ENCODE measurements at regions of chr19 and their contacts with region 1.

Region 1: GRCh38 chr19:3429581-3430080 is 50.7 kb downstream of the SMIM24 start:
- DNase-seq: peak; percentile 99
- H3K4me3 Mint-ChIP-seq: peak overlapping the region; percentile 51
- H3K27ac Mint-ChIP-seq: peak overlapping the region; percentile 95
- H3K4me1 Mint-ChIP-seq: peaks cover 22% of the 10 kb centered on the region
- H3K27me3 Mint-ChIP-seq: no peaks in the 10 kb centered on the region
- CTCF ChIP-seq: peak; percentile 92

Region 2: DNA sequence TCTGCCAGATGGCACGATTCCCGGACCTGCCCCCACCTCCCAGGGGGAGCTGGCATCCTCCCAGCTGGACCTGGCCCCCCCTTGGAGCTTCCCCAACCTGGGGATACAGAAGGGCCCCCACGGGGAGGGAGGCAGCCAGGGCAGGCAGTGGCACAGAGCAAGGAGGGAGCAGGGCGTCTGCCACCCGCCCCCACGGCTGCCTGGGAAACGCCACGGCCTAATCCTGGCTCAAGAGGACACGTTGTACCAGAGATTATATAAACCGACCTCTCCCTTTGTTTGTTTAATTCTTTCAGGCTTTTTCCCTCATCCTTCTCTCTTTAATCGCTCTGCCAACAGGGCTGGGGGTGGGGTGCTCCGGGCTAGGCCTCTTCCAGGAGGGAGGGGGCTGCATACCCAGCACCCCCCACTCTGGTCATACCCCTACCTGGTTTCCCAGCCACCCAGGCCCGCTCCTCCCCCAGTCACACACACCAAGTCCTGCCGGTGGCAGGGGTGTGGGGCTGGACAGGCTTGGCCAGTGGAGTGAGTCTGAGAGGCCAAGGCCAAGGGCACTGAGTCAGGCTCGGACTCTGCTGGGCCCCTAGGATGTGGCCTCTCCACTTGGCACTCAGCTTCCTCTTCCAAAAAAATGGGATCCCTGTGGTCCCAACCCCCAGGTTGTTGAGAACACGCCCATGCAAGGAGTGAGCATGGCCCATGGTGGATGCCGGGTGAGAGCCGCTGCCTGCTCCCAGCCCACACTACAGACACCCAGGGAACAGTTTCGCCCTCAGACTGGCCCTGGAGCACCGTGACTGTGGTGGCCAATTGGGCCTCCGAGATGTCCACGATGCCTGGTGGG is 92.7 kb before region 1 on chr19:
- CTCF ChIA-PET with region 1: interaction called, 4 read pairs
- POLR2A ChIA-PET with region 1: interaction called, 21 read pairs
- intact Hi-C with region 1: no loop called
- DNase-seq: peak; percentile 98
- H3K4me3 Mint-ChIP-seq: peak overlapping the region; percentile 55
- H3K27ac Mint-ChIP-seq: peak overlapping the region; percentile 99
- H3K4me1 Mint-ChIP-seq: peaks cover 48% of the 10 kb centered on the region
- H3K27me3 Mint-ChIP-seq: peaks cover 13% of the 10 kb centered on the region
- CTCF ChIP-seq: no peak

Region 3: DNA sequence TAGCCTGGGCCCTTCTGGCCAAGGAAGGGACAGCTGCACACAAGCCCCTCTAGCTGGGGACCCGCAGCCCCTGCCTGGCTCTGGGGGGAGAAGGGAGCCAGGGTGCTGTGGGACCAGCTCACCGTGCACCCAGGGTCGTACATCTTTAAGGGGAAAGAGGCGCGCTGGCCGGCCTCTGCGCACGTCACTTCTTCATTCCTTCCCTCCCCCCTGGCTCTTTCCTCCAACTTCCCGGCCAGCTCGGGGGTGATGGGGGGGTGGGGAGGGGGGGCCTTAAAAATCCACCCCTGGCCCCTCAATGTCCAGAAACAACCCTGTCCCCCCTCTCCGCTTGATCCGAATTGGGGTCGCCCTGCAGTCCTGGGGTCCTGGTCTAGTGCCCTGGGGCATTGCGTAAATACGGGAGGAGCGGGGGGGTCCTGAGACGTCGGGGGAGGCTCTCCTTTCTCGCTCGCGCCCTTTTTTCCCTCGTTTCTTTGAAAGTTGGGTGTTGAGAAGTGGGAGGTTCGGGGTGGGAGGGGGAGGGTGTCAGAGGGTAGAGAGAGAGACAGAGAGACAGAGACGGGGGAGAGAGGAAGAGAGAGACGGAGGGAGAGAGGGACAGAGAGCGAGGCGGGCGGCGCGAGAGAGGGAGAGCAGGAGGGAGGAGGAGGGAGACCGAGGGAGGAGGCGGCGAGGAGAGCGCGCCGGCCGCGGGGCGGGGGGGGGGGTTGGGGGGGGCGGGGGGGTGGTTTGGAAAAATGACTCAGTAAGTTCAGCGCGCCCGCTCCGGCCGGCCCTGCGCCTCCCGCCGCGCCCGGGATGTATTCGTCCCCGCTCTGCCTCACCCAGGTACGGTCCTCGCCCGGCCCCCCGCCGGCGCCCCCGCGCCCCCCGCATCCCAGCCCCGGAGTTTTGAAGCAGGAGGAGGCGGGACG is 63.5 kb before region 1 on chr19 and contains the start of gene NFIC:
- CTCF ChIA-PET with region 1: interaction called, 6 read pairs
- POLR2A ChIA-PET with region 1: interaction called, 13 read pairs
- intact Hi-C with region 1: loop called (anchors 1 kb)
- DNase-seq: peak; percentile 90
- H3K4me3 Mint-ChIP-seq: peak within 1 kb of the TSS; percentile 81
- H3K27ac Mint-ChIP-seq: no peak within 1 kb of the TSS
- H3K4me1 Mint-ChIP-seq: peaks cover 62% of the 10 kb centered on the region
- H3K27me3 Mint-ChIP-seq: no peaks in the 10 kb centered on the region
- CTCF ChIP-seq: no peak
- total RNA-seq, gene NFIC: 83.4 and 85.5 TPM in 2 replicates

Region 4: DNA sequence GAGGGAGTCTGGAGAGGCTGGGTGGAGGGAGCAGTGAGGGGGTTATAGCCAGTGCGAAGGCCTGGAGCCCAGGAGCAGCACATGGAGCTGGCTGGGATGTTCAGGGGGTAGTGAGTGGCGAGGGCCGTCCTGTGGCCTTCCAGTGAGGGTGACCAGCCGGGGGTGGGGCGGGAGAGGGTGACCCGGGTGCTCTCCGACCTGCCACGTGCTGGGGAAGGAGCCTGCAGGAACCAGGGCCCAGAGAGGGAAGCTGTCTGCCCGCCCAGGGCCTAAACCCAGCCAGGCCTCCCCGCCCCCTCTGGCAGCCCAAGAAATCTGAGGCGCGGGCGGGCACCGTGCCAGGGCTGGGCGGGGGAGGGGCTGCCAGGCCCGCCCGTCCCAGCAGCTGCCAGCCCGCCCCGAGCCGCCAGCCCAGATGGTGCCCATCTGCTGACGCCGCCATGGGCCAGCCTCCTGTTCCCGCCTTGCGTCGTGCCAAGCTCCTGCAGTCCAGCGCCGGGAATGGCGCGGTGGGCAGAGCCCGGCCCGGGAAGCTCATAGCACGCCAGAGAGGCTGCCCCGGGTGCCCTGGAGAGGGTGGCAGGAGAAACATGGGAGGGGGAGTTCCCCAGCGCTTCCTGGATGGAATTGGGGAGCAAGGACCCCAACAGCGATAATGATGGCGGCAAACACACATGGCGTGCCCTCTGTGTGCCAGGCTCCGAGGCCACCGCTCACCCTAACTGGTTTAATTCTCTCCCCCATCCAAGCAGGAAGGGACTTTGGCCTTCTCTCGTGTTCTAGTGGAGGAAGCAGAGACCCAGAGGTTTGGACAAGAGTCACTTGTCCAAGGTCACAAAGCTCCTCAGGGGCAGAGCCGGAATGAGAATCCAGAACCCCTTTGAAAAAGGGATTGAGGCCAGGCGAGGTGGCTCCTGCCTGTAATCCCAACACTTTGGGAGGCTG is 41.7 kb before region 1 on chr19:
- CTCF ChIA-PET with region 1: interaction called, 8 read pairs
- POLR2A ChIA-PET with region 1: interaction called, 11 read pairs
- intact Hi-C with region 1: no loop called
- DNase-seq: peak; percentile 94
- H3K4me3 Mint-ChIP-seq: peak overlapping the region; percentile 23
- H3K27ac Mint-ChIP-seq: peak overlapping the region; percentile 60
- H3K4me1 Mint-ChIP-seq: peaks cover 14% of the 10 kb centered on the region
- H3K27me3 Mint-ChIP-seq: no peaks in the 10 kb centered on the region
- CTCF ChIP-seq: no peak

Measured in MCF 10A (cell line).